ENCODE measurements at regions of chr1 and their contacts with region 1.

Region 1: GRCh38 chr1:160261893-160262794 is at the start of gene DCAF8:
- DNase-seq: peak; percentile 99
- H3K4me3 ChIP-seq: peak within 1 kb of the TSS; percentile 27 to 87 (median 64)
- H3K27ac ChIP-seq: peak within 1 kb of the TSS; percentile 74
- H3K4me1 ChIP-seq: peaks cover 15% of the 10 kb centered on the region
- H3K27me3 ChIP-seq: no peaks in the 10 kb centered on the region
- CTCF ChIP-seq: no peak
- POLR2A ChIP-seq: peak; percentile 91
- total RNA-seq, gene DCAF8: 99.9 and 106 TPM in 2 replicates

Region 2: GRCh38 chr1:160205242-160206035 is 56.7 kb before region 1 on chr1 and contains the start of gene PEA15:
- CTCF ChIA-PET with region 1: no interaction called
- POLR2A ChIA-PET with region 1: no interaction called
- dilution Hi-C with region 1: no loop called
- intact Hi-C with region 1: loop called (anchors 1 kb)
- DNase-seq: peak; percentile 54
- H3K4me3 ChIP-seq: peak within 1 kb of the TSS; percentile 55 to 81 (median 72)
- H3K27ac ChIP-seq: peak within 1 kb of the TSS; percentile 73
- H3K4me1 ChIP-seq: peaks cover 45% of the 10 kb centered on the region
- H3K27me3 ChIP-seq: no peaks in the 10 kb centered on the region
- CTCF ChIP-seq: no peak
- POLR2A ChIP-seq: no peak
- total RNA-seq, gene PEA15: 250 and 270 TPM in 2 replicates

Region 3: DNA sequence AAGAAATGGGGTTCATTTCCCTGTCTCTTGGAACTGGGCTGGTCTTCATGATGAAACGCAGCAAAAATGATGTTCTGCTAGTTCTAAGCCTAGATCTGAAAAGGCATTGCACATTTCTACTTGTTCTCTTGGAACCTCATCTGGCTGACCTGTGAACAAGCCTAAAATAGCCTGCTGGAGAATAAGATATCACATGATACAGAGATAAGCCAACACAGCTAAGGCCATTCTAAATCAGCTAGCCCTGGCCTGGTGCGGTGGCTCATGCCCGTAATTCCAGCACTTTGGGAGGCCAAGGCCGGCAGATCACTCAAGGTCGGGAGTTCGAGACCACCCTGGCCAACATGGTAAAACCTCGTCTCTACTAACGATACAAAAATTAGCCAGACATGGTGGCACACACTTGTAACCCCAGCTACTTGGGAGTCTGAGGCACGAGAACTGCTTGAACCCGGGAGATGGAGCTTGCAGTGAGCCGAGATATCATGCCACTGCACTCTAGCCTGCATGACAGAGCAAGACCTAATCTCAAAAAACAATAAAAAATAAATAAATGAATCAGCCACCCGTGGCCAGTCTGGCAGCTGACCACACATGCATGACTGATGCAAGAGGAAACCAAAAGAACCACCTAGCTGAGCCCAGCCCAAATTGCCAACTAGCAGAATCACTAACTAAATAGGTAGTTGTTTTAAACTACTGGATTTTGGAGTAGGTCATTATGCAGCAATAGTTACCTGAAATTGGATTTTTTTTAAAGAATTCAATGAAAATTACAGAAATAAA is 582.5 kb after region 1 on chr1:
- CTCF ChIA-PET with region 1: no interaction called
- POLR2A ChIA-PET with region 1: no interaction called
- dilution Hi-C with region 1: no loop called
- intact Hi-C with region 1: no loop called
- DNase-seq: no peak
- H3K4me3 ChIP-seq: no peak overlapping the region
- H3K27ac ChIP-seq: no peak overlapping the region
- H3K4me1 ChIP-seq: no peaks in the 10 kb centered on the region
- H3K27me3 ChIP-seq: no peaks in the 10 kb centered on the region
- CTCF ChIP-seq: no peak
- POLR2A ChIP-seq: no peak

Measured in endothelial cell of umbilical vein (primary cell).